ENCODE measurements at regions of chr3 and their contacts with region 1.

Region 1: DNA sequence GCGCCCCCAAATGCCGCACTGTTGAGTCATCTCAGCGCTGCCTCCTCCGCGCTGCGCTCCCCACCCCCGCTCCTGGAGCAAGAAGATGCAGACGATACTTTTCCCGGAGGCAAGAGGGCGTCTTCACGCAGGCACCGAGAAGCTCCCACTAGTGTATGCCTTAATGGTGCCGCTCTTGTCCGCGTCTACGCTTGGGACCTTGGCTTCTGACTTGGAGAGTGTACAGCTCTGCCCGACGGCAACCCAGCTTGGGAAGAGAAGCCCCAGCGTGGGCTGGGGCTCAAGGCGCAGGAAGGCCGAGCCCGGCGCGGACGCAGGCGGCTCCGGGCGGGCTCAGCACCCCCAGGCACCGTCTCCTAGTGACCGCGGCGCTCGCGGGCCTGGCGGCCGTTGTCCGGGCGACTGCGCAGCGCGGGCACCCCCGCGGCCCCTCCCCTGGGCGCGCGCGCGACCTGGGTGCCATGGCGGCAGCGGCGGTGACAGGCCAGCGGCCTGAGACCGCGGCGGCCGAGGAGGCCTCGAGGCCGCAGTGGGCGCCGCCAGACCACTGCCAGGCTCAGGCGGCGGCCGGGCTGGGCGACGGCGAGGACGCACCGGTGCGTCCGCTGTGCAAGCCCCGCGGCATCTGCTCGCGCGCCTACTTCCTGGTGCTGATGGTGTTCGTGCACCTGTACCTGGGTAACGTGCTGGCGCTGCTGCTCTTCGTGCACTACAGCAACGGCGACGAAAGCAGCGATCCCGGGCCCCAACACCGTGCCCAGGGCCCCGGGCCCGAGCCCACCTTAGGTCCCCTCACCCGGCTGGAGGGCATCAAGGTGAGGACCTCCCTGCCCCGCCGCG is at the start of gene P4HTM:
- DNase-seq: peak; percentile 57 to 85 (median 63)
- H3K4me3 ChIP-seq: peak within 1 kb of the TSS; percentile 88
- H3K4me3 Mint-ChIP-seq: peak within 1 kb of the TSS; percentile 92 to 99 (median 95)
- H3K27ac ChIP-seq: peak within 1 kb of the TSS; percentile 75
- H3K27ac Mint-ChIP-seq: peak within 1 kb of the TSS; percentile 89 to 99 (median 93)
- H3K4me1 ChIP-seq: peaks cover 22% of the 10 kb centered on the region
- H3K4me1 Mint-ChIP-seq: peaks cover 33 to 55% (median 49%) of the 10 kb centered on the region in 3 donors
- H3K27me3 ChIP-seq: no peaks in the 10 kb centered on the region
- H3K27me3 Mint-ChIP-seq: no peaks in the 10 kb centered on the region
- total RNA-seq, gene P4HTM: 28.6 to 33.0 TPM

Region 2: GRCh38 chr3:49007068-49007770 is 17.2 kb after region 1 on chr3 and contains the start of gene WDR6:
- CTCF ChIA-PET with region 1: interaction called, 109 read pairs
- POLR2A ChIA-PET with region 1: interaction called, 36 read pairs
- DNase-seq: peak; percentile 96 to 98 (median 97)
- H3K4me3 ChIP-seq: peak within 1 kb of the TSS; percentile 98
- H3K4me3 Mint-ChIP-seq: peak within 1 kb of the TSS; percentile 89 to 100 (median 98)
- H3K27ac ChIP-seq: peak within 1 kb of the TSS; percentile 88
- H3K27ac Mint-ChIP-seq: peak within 1 kb of the TSS; percentile 89 to 100 (median 99)
- H3K4me1 ChIP-seq: peaks cover 14% of the 10 kb centered on the region
- H3K4me1 Mint-ChIP-seq: peaks cover 22 to 38% (median 37%) of the 10 kb centered on the region in 3 donors
- H3K27me3 ChIP-seq: no peaks in the 10 kb centered on the region
- H3K27me3 Mint-ChIP-seq: peaks cover 0 to 3% of the 10 kb centered on the region in 2 donors
- total RNA-seq, gene WDR6: 158 to 167 TPM

Region 3: GRCh38 chr3:49013755-49014628 is 24.0 kb after region 1 on chr3:
- CTCF ChIA-PET with region 1: interaction called, 109 read pairs
- POLR2A ChIA-PET with region 1: interaction called, 11 read pairs
- DNase-seq: peak in 1 of 5 donors; percentile 24
- H3K4me3 ChIP-seq: no peak overlapping the region
- H3K4me3 Mint-ChIP-seq: peak overlapping the region in 1 of 7 donors; percentile 66
- H3K27ac ChIP-seq: no peak overlapping the region
- H3K27ac Mint-ChIP-seq: peak overlapping the region in 2 of 8 donors; percentile 36 to 43
- H3K4me1 ChIP-seq: peaks cover 11% of the 10 kb centered on the region
- H3K4me1 Mint-ChIP-seq: peaks cover 11 to 33% (median 26%) of the 10 kb centered on the region in 3 donors
- H3K27me3 ChIP-seq: no peaks in the 10 kb centered on the region
- H3K27me3 Mint-ChIP-seq: no peaks in the 10 kb centered on the region

Region 4: DNA sequence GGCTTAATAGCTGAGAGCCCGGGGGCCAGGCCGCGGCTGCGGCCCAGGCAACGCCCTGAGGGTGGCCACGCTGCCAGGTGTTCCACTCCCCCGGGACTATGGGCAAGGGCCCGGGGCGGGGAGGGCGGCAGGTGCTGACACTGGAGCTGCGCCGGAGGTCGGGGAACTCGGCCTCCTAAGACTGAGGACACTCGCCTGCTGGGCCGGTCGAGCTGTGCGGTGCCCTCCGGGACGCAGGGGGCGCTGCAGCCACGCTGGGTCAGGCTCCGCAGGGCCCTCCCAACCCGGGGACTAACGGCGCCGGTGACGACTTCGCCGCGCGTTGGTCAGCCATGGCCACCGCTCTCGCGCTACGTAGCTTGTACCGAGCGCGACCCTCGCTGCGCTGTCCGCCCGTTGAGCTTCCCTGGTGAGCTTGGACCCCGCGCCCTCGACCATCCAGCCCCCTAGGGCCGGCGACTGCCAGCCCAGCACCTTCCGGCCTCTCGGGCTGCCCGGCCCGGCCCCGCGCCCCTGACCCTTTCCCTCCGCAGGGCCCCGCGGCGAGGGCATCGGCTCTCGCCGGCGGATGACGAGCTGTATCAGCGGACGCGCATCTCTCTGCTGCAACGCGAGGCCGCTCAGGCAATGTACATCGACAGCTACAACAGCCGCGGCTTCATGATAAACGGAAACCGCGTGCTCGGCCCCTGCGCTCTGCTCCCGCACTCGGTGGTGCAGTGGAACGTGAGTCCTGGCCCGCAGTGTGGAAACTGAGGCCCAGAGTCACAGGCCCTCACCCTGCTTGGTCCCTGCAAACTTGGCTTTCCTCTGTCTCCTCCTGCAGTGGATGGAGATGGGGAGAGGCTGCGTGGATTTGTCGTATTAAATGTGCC is 32.0 kb after region 1 on chr3 and contains the start of gene NDUFAF3:
- CTCF ChIA-PET with region 1: interaction called, 67 read pairs
- POLR2A ChIA-PET with region 1: interaction called, 45 read pairs
- DNase-seq: peak; percentile 88 to 93 (median 90)
- H3K4me3 ChIP-seq: peak within 1 kb of the TSS; percentile 95
- H3K4me3 Mint-ChIP-seq: peak within 1 kb of the TSS; percentile 91 to 97 (median 95)
- H3K27ac ChIP-seq: peak within 1 kb of the TSS; percentile 99
- H3K27ac Mint-ChIP-seq: peak within 1 kb of the TSS; percentile 95 to 99 (median 98)
- H3K4me1 ChIP-seq: peaks cover 38% of the 10 kb centered on the region
- H3K4me1 Mint-ChIP-seq: peaks cover 30 to 73% (median 36%) of the 10 kb centered on the region in 3 donors
- H3K27me3 ChIP-seq: no peaks in the 10 kb centered on the region
- H3K27me3 Mint-ChIP-seq: peaks cover 0 to 2% of the 10 kb centered on the region in 2 donors
- total RNA-seq, gene NDUFAF3: 86.3 to 88.8 TPM

Region 5: GRCh38 chr3:49028673-49029562 is 38.9 kb after region 1 on chr3 and contains the start of gene IMPDH2:
- CTCF ChIA-PET with region 1: interaction called, 22 read pairs
- POLR2A ChIA-PET with region 1: interaction called, 45 read pairs
- DNase-seq: peak; percentile 88 to 96 (median 92)
- H3K4me3 ChIP-seq: peak within 1 kb of the TSS; percentile 73
- H3K4me3 Mint-ChIP-seq: peak within 1 kb of the TSS; percentile 87 to 98 (median 93)
- H3K27ac ChIP-seq: peak within 1 kb of the TSS; percentile 88
- H3K27ac Mint-ChIP-seq: peak within 1 kb of the TSS; percentile 95 to 100 (median 98)
- H3K4me1 ChIP-seq: peaks cover 16% of the 10 kb centered on the region
- H3K4me1 Mint-ChIP-seq: peaks cover 24 to 49% (median 32%) of the 10 kb centered on the region in 3 donors
- H3K27me3 ChIP-seq: no peaks in the 10 kb centered on the region
- H3K27me3 Mint-ChIP-seq: peaks cover 0 to 2% of the 10 kb centered on the region in 2 donors
- total RNA-seq, gene IMPDH2: 448 to 457 TPM

Region 6: GRCh38 chr3:49057268-49057667 is 67.3 kb after region 1 on chr3:
- CTCF ChIA-PET with region 1: no interaction called
- POLR2A ChIA-PET with region 1: no interaction called
- DNase-seq: no peak
- H3K4me3 ChIP-seq: no peak overlapping the region
- H3K4me3 Mint-ChIP-seq: no peak overlapping the region
- H3K27ac ChIP-seq: no peak overlapping the region
- H3K27ac Mint-ChIP-seq: peak overlapping the region in 1 of 8 donors; percentile 27
- H3K4me1 ChIP-seq: no peaks in the 10 kb centered on the region
- H3K4me1 Mint-ChIP-seq: peaks cover 4 to 15% (median 5%) of the 10 kb centered on the region in 3 donors
- H3K27me3 ChIP-seq: no peaks in the 10 kb centered on the region
- H3K27me3 Mint-ChIP-seq: no peaks in the 10 kb centered on the region

Region 7: GRCh38 chr3:49093853-49094767 is 104.1 kb after region 1 on chr3 and contains the start of gene QRICH1:
- CTCF ChIA-PET with region 1: interaction called, 7 read pairs
- POLR2A ChIA-PET with region 1: interaction called, 11 read pairs
- DNase-seq: peak; percentile 92 to 98 (median 96)
- H3K4me3 ChIP-seq: peak within 1 kb of the TSS; percentile 97
- H3K4me3 Mint-ChIP-seq: peak within 1 kb of the TSS; percentile 90 to 98 (median 93)
- H3K27ac ChIP-seq: peak within 1 kb of the TSS; percentile 81
- H3K27ac Mint-ChIP-seq: peak within 1 kb of the TSS; percentile 94 to 98 (median 96)
- H3K4me1 ChIP-seq: peaks cover 36% of the 10 kb centered on the region
- H3K4me1 Mint-ChIP-seq: peaks cover 29 to 42% (median 40%) of the 10 kb centered on the region in 3 donors
- H3K27me3 ChIP-seq: no peaks in the 10 kb centered on the region
- H3K27me3 Mint-ChIP-seq: no peaks in the 10 kb centered on the region
- total RNA-seq, gene QRICH1: 122 to 134 TPM

Region 8: DNA sequence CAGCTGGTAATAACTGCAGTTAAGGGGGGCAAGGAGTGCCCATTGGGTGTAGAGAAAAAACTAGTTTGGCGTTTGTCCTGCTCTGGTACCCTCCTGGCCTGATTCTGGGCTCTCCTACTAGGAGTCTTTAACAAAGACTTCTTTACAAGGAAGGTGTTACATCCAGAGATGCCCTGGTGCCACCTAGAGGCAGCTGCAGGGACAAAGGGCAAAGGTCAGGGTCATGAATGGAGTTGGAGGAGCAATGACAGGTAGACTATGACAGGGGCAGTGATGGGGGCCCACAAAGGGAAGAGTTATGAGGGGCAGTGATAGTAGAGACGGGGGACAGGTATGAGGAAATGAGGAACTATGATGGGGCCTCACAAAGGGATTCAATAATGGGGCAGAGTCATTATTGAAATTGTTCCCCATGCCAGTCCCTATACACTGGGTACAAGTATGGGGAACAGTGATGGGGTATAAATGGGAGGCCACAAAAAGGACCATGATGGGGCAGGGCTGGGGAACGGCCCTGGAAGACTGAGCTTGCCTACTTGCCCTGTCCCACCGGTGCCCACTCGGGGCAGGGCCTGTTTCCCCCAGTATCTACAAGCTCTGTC is 168.2 kb after region 1 on chr3:
- CTCF ChIA-PET with region 1: interaction called, 21 read pairs
- POLR2A ChIA-PET with region 1: no interaction called
- DNase-seq: peak; percentile 36 to 78 (median 49)
- H3K4me3 ChIP-seq: no peak overlapping the region
- H3K4me3 Mint-ChIP-seq: peak overlapping the region in 1 of 7 donors; percentile 2
- H3K27ac ChIP-seq: no peak overlapping the region
- H3K27ac Mint-ChIP-seq: peak overlapping the region in 6 of 8 donors; percentile 2 to 98 (median 40)
- H3K4me1 ChIP-seq: no peaks in the 10 kb centered on the region
- H3K4me1 Mint-ChIP-seq: peaks cover 0 to 12% (median 4%) of the 10 kb centered on the region in 3 donors
- H3K27me3 ChIP-seq: no peaks in the 10 kb centered on the region
- H3K27me3 Mint-ChIP-seq: no peaks in the 10 kb centered on the region

Measured in CD8-positive, alpha-beta memory T cell (primary cell).